ENCODE measurements at regions of chr3 and their contacts with region 1.

Region 1: DNA sequence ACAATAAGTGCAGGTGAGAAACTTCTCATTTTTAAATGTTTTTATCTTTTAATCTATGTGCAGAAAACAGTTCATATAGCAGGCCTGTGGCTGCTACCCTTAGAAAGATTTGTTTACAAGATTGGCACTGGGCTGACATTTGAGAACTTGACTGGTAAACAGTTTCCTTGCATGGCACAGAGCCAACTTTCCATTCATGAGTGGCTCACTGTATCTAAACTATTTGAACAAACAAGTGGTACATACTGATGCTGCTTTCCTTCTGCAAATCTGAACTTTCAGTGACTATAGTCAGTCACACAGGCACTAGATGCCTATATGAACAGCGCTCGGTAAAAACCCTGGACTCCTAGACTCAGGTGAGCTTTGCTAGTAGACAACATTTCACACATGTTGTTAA is 6.3 kb upstream of the GTPBP8 start:
- DNase-seq: no peak
- H3K4me3 ChIP-seq: no peak overlapping the region
- H3K27ac ChIP-seq: no peak overlapping the region
- H3K4me1 ChIP-seq: no peaks in the 10 kb centered on the region
- H3K27me3 ChIP-seq: no peaks in the 10 kb centered on the region
- CTCF ChIP-seq: no peak
- POLR2A ChIP-seq: no peak

Region 2: DNA sequence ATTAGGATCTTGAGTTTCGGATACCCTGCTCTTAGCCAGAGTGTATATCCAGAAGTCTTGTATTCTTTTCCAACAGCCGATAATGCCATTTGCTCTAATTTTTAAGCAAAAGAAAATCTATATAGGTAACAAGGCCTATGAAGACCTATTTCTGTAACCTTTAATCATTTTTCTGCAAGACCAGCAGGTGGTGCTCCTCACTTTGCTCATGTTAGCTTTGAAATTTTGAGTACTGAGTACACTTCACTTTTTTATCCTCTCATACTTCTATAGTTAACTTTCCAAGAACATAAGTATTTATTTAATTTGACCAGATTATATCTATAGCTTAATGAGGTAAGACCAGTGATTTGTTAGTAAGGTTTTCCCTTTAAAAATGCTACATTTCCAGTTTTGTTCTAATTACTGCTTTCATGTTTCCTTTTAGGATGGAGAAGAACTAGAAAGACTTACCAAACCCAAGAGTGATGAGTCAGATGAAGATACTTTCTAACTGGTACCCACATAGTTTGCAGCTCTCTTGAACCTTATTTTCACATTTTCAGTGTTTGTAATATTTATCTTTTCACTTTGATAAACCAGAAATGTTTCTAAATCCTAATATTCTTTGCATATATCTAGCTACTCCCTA is 402.1 kb before region 1 on chr3:
- intact Hi-C with region 1: no loop called
- DNase-seq: peak; percentile 29 to 47
- H3K4me3 ChIP-seq: no peak overlapping the region
- H3K27ac ChIP-seq: no peak overlapping the region
- H3K4me1 ChIP-seq: peaks cover 0 to 4% of the 10 kb centered on the region in 2 donors
- H3K27me3 ChIP-seq: no peaks in the 10 kb centered on the region
- CTCF ChIP-seq: peak; percentile 52 to 78 (median 60)
- POLR2A ChIP-seq: no peak

Region 3: GRCh38 chr3:112734718-112735350 is 249.7 kb before region 1 on chr3:
- intact Hi-C with region 1: loop called (anchors 10 kb)
- DNase-seq: peak; percentile 27 to 52
- H3K4me3 ChIP-seq: no peak overlapping the region
- H3K27ac ChIP-seq: no peak overlapping the region
- H3K4me1 ChIP-seq: no peaks in the 10 kb centered on the region
- H3K27me3 ChIP-seq: no peaks in the 10 kb centered on the region
- CTCF ChIP-seq: peak; percentile 37 to 54 (median 44)
- POLR2A ChIP-seq: no peak

Measured in uterus (tissue), 4 donors.